Activated B cell treated with CpG ODN at 0.5 μM for 24 hours (primary cell): ENCODE measurements at regions of chr2 and their contacts with region 1.

Region 1: GRCh38 chr2:27032495-27033252 is at the start of gene TMEM214:
- DNase-seq: peak; percentile 76
- ATAC-seq: peak; percentile 95
- H3K4me3 Mint-ChIP-seq: peak within 1 kb of the TSS; percentile 93
- H3K27ac Mint-ChIP-seq: peak within 1 kb of the TSS; percentile 80
- H3K4me1 Mint-ChIP-seq: peaks cover 32% of the 10 kb centered on the region
- H3K27me3 Mint-ChIP-seq: no peaks in the 10 kb centered on the region
- CTCF ChIP-seq: no peak
- total RNA-seq, gene TMEM214: 84.4 and 92.1 TPM in 2 replicates

Region 2: DNA sequence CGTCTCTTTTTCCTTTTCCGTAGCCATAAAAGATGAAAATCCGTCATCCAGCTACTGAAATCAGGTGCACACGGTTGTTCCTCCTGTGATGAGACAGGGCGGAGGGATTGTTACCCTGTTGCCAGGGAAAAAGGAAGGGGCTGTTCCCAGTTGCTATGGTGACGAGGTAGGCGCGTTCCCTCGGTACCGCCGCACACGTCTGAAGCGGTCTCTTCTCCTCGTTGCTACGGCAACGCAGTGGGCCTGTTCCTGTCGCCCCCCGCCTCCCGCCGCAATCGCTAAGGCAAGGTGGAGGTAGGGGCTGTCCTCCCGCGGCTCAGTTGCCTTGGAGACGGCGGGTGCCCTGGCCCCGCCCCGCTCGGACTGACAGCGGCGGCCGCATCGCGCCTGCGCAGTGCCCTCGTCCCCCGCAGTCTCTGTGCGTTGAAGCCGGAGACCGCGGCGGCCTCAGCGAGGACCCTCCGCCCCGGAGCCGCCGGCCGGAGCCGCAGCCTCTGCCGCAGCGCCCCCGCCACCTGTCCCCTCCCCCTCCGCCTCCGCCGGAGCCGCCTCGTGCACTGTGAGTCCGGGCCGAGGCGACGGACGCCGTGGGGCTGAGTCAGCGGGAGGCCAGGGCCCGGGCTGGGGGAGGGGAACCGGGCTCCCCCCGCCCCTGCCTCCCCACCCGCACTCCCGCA is 62.3 kb before region 1 on chr2 and contains the start of gene MAPRE3:
- CTCF ChIA-PET with region 1: no interaction called
- POLR2A ChIA-PET with region 1: no interaction called
- intact Hi-C with region 1: loop called (anchors 1 kb)
- DNase-seq: peak; percentile 88
- ATAC-seq: peak; percentile 93
- H3K4me3 Mint-ChIP-seq: peak within 1 kb of the TSS; percentile 85
- H3K27ac Mint-ChIP-seq: peak within 1 kb of the TSS; percentile 59
- H3K4me1 Mint-ChIP-seq: peaks cover 21% of the 10 kb centered on the region
- H3K27me3 Mint-ChIP-seq: peaks cover 40% of the 10 kb centered on the region
- CTCF ChIP-seq: no peak
- total RNA-seq, gene MAPRE3: 4.6 and 6.3 TPM in 2 replicates

Region 3: DNA sequence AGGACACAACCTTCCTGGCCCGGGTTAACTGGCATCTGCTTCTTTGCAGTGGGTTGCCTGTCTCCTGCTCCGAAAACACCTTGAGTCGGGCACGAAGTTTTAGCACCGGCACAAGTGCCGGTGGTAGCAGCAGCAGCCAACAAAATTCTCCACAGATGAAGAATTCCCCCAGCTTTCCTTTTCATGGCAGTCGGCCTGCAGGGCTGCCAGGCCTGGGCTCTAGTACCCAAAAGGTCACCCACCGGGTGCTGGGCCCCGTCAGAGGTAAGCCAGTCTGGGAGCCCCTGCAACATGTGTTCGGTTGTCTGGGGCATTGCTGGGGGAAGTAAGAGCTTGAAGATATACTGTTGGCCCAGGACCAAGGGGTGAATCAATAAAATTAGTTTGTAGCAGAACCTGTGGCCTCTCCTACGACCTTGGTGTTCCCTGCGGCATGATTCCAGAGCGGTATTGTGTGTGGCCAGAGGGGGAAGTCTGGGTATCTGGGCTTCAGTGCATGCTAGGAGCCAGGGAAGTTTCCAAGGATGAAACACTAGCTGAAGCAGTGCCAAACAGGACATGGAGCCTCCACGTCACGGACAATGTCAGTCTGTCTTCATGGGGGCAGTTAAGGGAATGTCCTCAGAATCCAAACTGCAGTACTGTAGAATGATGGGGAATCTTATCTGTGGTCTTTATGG is 26.6 kb after region 1 on chr2:
- CTCF ChIA-PET with region 1: no interaction called
- POLR2A ChIA-PET with region 1: no interaction called
- intact Hi-C with region 1: no loop called
- DNase-seq: no peak
- ATAC-seq: no peak
- H3K4me3 Mint-ChIP-seq: no peak overlapping the region
- H3K27ac Mint-ChIP-seq: no peak overlapping the region
- H3K4me1 Mint-ChIP-seq: no peaks in the 10 kb centered on the region
- H3K27me3 Mint-ChIP-seq: no peaks in the 10 kb centered on the region
- CTCF ChIP-seq: no peak

Region 4: GRCh38 chr2:27225526-27225925 is 192.9 kb after region 1 on chr2:
- CTCF ChIA-PET with region 1: no interaction called
- POLR2A ChIA-PET with region 1: no interaction called
- intact Hi-C with region 1: no loop called
- DNase-seq: no peak
- ATAC-seq: no peak
- H3K4me3 Mint-ChIP-seq: no peak overlapping the region
- H3K27ac Mint-ChIP-seq: no peak overlapping the region
- H3K4me1 Mint-ChIP-seq: no peaks in the 10 kb centered on the region
- H3K27me3 Mint-ChIP-seq: no peaks in the 10 kb centered on the region
- CTCF ChIP-seq: no peak